AG04450 (cell line): ENCODE measurements at regions of chr2 and their contacts with region 1.

Region 1: GRCh38 chr2:217510771-217511291 is 492.0 kb downstream of the TNS1 start:
- DNase-seq: peak; percentile 87
- H3K4me3 ChIP-seq: no peak overlapping the region
- H3K27ac ChIP-seq: no peak overlapping the region
- H3K27me3 ChIP-seq: no peaks in the 10 kb centered on the region
- CTCF ChIP-seq: peak; percentile 73

Region 2: GRCh38 chr2:217713395-217714286 is 202.8 kb after region 1 on chr2:
- CTCF ChIA-PET with region 1: interaction called, 78 read pairs
- POLR2A ChIA-PET with region 1: interaction called, 4 read pairs
- DNase-seq: peak; percentile 54
- H3K4me3 ChIP-seq: no peak overlapping the region
- H3K27ac ChIP-seq: peak overlapping the region; percentile 31
- H3K27me3 ChIP-seq: no peaks in the 10 kb centered on the region
- CTCF ChIP-seq: peak; percentile 97